Heart right ventricle (tissue), 16 donors: ENCODE measurements at regions of chr11 and their contacts with region 1.

Region 1: GRCh38 chr11:45798793-45799441 is 6.0 kb upstream of the SLC35C1 start:
- DNase-seq: no peak
- ATAC-seq: no peak
- H3K4me3 ChIP-seq: no peak overlapping the region
- H3K27ac ChIP-seq: no peak overlapping the region
- H3K4me1 ChIP-seq: peaks cover 0 to 6% (median 2%) of the 10 kb centered on the region in 9 donors
- H3K27me3 ChIP-seq: no peaks in the 10 kb centered on the region
- CTCF ChIP-seq: no peak

Region 2: GRCh38 chr11:45745065-45745811 is 53.7 kb before region 1 on chr11:
- intact Hi-C with region 1: loop called in 1 of 10 experiments (anchors 2 kb)
- DNase-seq: peak; percentile 75 to 77
- ATAC-seq: peak; percentile 82 to 95 (median 92)
- H3K4me3 ChIP-seq: no peak overlapping the region
- H3K27ac ChIP-seq: peak overlapping the region in 9 of 10 donors; percentile 28 to 74 (median 57)
- H3K4me1 ChIP-seq: peaks cover 0 to 31% (median 8%) of the 10 kb centered on the region in 9 donors
- H3K27me3 ChIP-seq: no peaks in the 10 kb centered on the region
- CTCF ChIP-seq: no peak

Region 3: DNA sequence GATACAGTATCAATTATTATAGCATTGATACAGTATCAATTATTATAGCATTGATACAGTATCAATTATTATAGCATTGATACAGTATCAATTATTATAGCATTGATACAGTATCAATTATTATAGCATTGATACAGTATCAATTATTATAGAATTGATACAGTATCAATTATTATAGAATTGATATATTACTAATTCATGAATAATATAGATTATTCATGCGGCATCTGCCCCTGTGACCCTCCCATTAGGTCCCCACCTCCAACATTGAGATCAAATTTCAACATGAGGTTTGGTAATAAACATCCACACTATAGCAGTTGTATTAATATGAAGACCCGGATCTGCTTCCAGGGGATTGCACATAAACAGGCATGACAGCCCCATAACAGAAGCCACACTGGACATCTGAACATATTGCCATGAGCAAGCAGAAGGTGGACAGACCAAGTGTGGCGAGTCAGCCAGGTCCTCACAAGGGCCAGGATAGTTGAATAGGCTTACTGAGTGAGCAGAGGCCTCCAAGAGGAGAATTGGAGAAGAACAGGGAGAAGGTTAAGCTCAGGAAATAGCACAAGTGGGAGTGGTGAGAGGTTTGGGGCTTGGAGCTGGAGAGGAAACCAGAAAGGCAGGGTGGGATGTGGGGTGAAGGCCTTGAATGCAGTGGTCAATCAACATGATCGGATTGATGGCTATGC is 16.7 kb after region 1 on chr11:
- intact Hi-C with region 1: loop called in 1 of 10 experiments (anchors 1 kb)
- DNase-seq: no peak
- ATAC-seq: no peak
- H3K4me3 ChIP-seq: no peak overlapping the region
- H3K27ac ChIP-seq: no peak overlapping the region
- H3K4me1 ChIP-seq: no peaks in the 10 kb centered on the region
- H3K27me3 ChIP-seq: no peaks in the 10 kb centered on the region
- CTCF ChIP-seq: no peak